OCI-LY7 (cell line): ENCODE measurements at regions of chr20 and their contacts with region 1.

Region 1: GRCh38 chr20:51460569-51461250 is 81.8 kb downstream of the NFATC2 start:
- DNase-seq: peak; percentile 98
- H3K4me3 ChIP-seq: peak overlapping the region; percentile 12
- H3K27ac ChIP-seq: peak overlapping the region; percentile 98
- H3K4me1 ChIP-seq: peaks cover 85% of the 10 kb centered on the region
- CTCF ChIP-seq: no peak

Region 2: DNA sequence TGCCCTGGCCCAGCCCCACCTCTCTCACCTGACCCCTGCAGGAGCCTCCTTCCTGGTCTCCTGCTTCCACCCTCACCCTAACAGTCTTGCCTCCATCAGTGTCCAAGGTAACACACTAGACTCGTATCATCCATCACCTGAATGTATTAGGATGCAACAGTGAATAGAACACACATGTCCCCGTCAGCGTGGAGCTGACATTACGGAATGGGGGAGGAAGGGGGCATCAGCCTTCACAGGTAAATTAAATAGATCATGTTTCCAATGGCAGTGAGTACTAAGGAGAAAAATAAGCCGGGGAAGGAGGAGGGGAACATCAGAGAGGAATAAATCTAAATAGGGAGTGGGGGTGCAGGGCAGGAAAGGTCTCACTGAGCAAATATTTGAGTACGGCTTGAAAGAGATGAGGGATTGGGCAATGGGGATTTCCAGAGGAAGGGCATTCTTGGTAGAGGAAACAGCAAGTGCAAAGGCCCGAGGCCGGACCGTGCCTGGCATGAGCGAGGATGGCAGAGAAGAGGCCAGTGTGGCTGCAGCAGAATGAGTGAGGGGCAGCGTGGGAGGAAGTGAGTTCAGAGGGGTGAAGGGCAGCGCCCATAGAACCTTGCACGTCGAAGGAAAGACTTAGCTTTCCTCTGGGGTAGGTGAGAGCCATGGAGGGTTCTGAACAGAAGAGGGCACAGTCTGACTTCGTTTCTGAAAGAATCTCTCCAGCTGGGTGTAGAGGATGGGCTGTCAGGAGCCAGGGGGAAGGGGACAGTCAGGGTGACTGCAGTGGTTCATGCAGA is 1060.6 kb before region 1 on chr20:
- CTCF ChIA-PET with region 1: no interaction called
- POLR2A ChIA-PET with region 1: no interaction called
- intact Hi-C with region 1: no loop called
- DNase-seq: no peak
- H3K4me3 ChIP-seq: no peak overlapping the region
- H3K27ac ChIP-seq: no peak overlapping the region
- H3K4me1 ChIP-seq: no peaks in the 10 kb centered on the region
- CTCF ChIP-seq: no peak

Region 3: DNA sequence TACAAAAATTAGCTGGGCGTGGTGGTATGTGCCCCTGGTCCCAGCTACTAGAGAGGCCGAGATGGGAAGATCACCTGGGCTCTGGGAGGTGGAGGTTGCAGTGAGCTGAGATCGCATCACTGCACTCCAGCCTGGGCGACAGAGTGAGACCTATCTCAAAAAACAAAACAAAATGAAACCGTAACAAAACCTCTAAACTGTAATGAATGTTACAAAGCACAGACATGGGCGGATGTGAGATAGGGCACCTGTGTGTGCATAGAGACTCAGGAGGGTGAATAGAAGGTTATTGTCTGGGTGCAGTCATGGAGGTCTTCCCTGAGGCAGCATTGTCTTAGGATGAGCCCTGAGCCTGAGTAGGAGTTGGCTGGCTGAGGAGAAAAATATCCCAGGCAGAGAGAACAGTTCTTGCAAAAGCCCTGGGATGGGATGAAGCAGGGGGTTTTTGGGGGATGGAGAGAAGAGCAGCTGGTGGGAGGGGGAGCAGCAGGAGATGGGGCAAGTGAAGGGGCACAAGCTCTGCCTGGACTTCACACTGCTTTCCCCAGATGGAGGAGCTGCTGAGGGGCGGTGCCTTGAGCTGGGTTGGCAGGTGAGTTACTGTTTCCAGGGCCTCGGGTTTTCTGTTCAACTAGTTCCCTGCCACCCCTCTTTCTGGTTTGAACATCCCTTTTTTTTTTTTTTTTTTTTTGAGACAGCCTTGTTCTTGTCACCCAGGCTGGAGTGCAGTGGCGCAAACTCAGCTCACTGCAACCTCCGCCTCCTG is 660.6 kb before region 1 on chr20:
- CTCF ChIA-PET with region 1: no interaction called
- POLR2A ChIA-PET with region 1: no interaction called
- intact Hi-C with region 1: loop called (anchors 10 kb)
- DNase-seq: peak; percentile 86
- H3K4me3 ChIP-seq: peak overlapping the region; percentile 61
- H3K27ac ChIP-seq: peak overlapping the region; percentile 98
- H3K4me1 ChIP-seq: peaks cover 86% of the 10 kb centered on the region
- CTCF ChIP-seq: no peak

Region 4: DNA sequence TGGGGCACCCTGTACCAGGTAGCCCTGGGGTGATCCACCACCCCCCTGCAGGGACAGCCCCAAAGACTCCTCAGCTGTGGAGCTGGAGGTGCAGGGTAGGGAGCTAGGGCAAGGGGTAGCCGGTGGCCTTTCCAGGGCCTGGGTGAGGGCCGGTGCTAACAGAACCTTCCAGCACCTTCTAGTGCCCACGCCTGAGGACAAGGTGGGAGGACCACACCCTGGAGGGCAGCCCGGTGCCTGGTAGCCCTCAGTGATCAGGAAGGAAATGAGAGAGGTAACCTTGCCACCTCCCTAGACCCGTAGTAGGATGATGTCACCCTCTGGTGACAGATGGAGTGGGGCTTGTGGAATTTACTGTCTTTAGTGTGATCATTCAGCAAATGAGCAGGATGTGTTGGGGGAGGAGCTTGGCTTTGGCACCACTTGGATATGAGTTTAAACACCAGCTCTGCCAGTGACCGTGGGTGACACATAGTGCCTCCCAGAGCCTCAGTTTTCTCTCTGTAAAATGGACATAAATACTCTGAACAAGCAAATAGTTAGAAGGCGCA is 105.9 kb before region 1 on chr20:
- CTCF ChIA-PET with region 1: no interaction called
- POLR2A ChIA-PET with region 1: no interaction called
- intact Hi-C with region 1: no loop called
- DNase-seq: no peak
- H3K4me3 ChIP-seq: no peak overlapping the region
- H3K27ac ChIP-seq: no peak overlapping the region
- H3K4me1 ChIP-seq: no peaks in the 10 kb centered on the region
- CTCF ChIP-seq: no peak

Region 5: DNA sequence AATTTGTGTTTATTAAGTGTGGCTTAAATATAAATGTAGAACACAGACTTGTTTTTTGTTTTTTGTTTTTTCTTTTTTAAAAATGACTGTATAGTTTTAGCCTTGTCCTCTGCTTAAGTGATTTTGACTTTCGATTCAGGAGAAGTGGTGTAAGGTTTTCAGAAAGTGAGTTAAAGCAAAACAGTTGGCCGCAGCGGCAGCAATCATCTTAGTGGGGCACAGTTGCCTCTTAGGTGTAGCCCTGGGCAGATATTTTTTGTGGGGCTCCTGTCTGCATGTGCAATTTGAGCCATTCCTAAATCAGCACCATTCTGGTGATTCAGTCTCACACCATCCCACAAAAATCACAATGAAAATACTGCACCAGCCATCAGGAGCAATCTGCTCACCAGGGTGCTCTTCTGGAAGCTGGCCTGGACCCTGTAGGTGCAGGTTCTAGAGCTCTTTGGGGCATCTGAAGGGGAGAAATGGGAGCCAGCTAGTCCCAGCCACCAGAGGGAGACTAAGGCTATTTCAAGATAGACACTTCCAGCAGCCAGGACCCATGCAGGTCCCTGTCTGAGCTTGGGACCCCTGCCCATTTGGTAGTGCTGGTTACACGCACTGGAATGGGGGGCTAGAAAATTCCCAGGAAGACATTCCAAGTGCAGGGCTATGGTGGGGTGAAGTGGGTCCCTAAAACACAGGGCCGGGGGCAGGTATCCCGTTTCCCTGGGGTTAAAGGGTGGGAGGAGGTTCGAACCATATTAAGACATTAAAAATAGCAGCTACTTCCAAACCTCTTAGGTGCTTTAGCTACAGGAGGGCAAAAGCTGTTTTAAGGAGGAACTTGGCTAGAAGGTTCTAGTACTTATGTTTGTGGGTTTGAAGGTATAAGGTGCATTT is 74.8 kb before region 1 on chr20:
- CTCF ChIA-PET with region 1: interaction called, 3 read pairs
- POLR2A ChIA-PET with region 1: interaction called, 7 read pairs
- intact Hi-C with region 1: loop called (anchors 1 kb)
- DNase-seq: peak; percentile 74
- H3K4me3 ChIP-seq: peak overlapping the region; percentile 6
- H3K27ac ChIP-seq: peak overlapping the region; percentile 95
- H3K4me1 ChIP-seq: peaks cover 100% of the 10 kb centered on the region
- CTCF ChIP-seq: peak; percentile 82

Region 6: DNA sequence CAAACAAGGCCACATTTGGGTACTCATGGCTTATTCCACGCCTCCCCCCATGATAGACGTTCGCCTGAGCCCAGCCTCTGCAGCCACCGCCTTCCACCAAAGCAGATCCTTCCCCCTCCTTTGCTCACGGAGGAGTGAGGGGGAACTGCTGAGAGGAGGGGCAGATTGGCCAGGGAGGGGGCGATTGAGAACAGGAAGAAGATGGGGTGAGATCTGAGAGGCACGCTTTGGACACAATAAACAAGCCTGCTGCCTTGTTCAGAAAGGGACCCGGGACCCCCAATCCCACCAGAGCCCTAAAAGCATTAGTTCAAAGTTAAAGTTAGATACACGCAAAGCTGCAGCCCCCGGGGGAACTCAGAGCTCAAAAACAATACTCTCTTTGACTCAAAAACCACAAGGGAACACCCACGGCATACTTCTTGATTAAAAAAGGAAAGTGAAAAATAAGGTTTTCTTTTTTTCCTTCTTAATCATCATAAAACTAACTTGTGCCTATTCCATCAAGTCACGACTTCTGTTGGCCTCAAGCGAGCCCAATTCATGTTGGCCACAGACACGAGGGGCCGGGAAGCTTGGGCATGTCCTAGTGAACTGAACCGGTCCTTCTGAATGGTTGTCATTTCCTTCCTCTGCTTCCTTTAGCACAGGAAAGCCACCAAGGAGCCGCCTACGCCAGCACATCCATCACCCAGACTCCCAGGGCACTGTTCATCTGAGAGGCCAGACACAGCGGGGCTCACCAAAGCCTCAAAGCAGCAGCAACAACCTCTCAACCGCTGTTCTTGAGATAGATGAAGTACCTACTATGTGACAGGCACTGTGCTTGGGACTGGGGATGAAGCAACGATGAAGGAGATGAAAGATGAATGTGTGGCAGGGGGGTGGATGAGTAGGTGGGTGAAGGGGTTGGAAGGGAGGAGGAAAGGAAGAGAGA is 37.1 kb after region 1 on chr20:
- CTCF ChIA-PET with region 1: interaction called, 3 read pairs
- POLR2A ChIA-PET with region 1: no interaction called
- intact Hi-C with region 1: loop called (anchors 2 kb)
- DNase-seq: peak; percentile 38
- H3K4me3 ChIP-seq: peak overlapping the region; percentile 11
- H3K27ac ChIP-seq: peak overlapping the region; percentile 79
- H3K4me1 ChIP-seq: peaks cover 75% of the 10 kb centered on the region
- CTCF ChIP-seq: no peak

Region 7: DNA sequence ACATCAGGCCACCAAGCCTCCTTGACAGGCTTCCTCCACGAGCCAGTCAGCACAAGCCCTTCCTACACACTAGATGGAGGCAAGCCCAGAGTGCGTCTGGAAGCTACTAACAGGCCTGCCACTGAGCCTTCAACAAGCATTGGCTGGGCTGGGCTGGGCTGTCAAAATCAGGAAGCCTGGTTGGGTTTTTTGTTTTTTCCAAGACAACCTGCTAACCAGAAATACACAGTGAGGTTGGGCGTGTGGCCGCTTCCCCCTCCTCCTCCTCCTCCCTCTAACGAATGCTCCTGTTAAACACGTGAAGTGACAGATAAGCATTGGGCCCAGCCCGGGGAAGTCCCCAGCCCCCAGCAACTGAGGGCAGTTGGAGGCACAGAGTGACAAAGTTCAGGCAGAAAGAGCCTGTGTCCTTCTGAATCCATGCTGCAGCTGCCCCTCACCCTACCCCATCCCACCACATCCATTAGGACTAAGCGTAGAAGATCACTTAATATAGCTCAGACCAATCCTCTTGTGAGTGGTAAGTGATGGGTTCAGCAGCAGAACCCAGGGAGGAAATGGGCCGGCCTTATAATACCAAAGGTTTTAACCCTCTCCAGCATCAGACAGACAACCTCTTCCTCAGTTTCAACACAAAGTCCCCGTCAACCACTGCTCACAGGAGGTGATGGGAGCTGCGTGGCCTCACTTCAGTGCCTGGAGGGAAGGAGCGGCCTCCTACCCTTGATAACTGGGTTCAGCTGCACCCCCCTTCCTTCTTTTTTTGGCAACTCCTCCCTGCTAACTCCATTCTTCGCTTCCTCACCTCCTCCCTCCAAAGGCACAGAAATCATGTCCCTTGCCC is 80.7 kb after region 1 on chr20:
- CTCF ChIA-PET with region 1: no interaction called
- POLR2A ChIA-PET with region 1: interaction called, 3 read pairs
- intact Hi-C with region 1: loop called (anchors 2 kb)
- DNase-seq: peak; percentile 72
- H3K4me3 ChIP-seq: peak overlapping the region; percentile 79
- H3K27ac ChIP-seq: peak overlapping the region; percentile 77
- H3K4me1 ChIP-seq: peaks cover 58% of the 10 kb centered on the region
- CTCF ChIP-seq: no peak